IMR-90 (cell line): ENCODE measurements at regions of chr17 and their contacts with region 1.

Region 1: GRCh38 chr17:62981928-62982327 is 15.9 kb downstream of the TANC2 start:
- DNase-seq: peak; percentile 68
- ATAC-seq: peak; percentile 37; the same call in 1 of the 2 replicates
- H3K4me3 ChIP-seq: no peak overlapping the region
- H3K27ac ChIP-seq: no peak overlapping the region
- H3K4me1 ChIP-seq: peaks cover 7% of the 10 kb centered on the region; the same call in 1 of the 2 replicates
- H3K27me3 ChIP-seq: no peaks in the 10 kb centered on the region
- CTCF ChIP-seq: no peak
- POLR2A ChIP-seq: no peak
- RAD21 ChIP-seq: no peak

Region 2: DNA sequence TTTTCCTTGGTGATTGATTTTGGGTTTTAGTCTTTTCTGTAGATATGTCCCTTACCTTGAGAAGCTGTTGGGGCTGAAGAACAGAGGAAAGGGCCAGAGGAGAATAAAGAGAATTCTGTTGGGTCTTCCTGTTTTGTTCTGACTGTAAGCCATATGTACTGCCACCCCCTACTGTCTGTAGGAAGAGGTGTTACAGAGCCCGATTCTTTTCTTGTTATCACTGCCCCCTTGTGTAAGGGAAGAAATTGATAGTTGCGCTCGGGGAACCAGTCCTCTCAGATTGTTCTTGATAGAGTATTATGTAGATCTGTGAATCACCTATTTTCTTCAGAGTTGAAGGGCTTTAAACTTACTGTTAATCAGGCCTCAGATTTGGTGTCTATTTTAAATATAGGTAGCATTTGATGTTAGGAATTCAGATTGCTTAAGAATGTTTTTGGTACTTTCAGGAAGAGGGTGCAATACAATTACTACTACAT is 13.4 kb before region 1 on chr17:
- CTCF ChIA-PET with region 1: no interaction called
- POLR2A ChIA-PET with region 1: no interaction called
- dilution Hi-C with region 1: no loop called
- in situ Hi-C with region 1: no loop called
- intact Hi-C with region 1: no loop called
- DNase-seq: peak; percentile 94
- ATAC-seq: peak; percentile 43
- H3K4me3 ChIP-seq: peak overlapping the region; percentile 90
- H3K27ac ChIP-seq: peak overlapping the region; percentile 32; the same call in 1 of the 2 replicates
- H3K4me1 ChIP-seq: peaks cover 16% of the 10 kb centered on the region
- H3K27me3 ChIP-seq: no peaks in the 10 kb centered on the region
- CTCF ChIP-seq: peak; percentile 99
- POLR2A ChIP-seq: peak; percentile 77
- RAD21 ChIP-seq: peak; percentile 94

Region 3: GRCh38 chr17:62994931-62995330 is 13.0 kb after region 1 on chr17:
- CTCF ChIA-PET with region 1: interaction called, 3 read pairs
- POLR2A ChIA-PET with region 1: no interaction called
- dilution Hi-C with region 1: no loop called
- in situ Hi-C with region 1: no loop called
- intact Hi-C with region 1: loop called (anchors 2 kb)
- DNase-seq: peak; percentile 15
- ATAC-seq: no peak
- H3K4me3 ChIP-seq: no peak overlapping the region
- H3K27ac ChIP-seq: no peak overlapping the region
- H3K4me1 ChIP-seq: no peaks in the 10 kb centered on the region
- H3K27me3 ChIP-seq: no peaks in the 10 kb centered on the region
- CTCF ChIP-seq: no peak
- POLR2A ChIP-seq: no peak
- RAD21 ChIP-seq: no peak

Region 4: GRCh38 chr17:63024716-63025115 is 42.8 kb after region 1 on chr17:
- CTCF ChIA-PET with region 1: no interaction called
- POLR2A ChIA-PET with region 1: no interaction called
- dilution Hi-C with region 1: no loop called
- in situ Hi-C with region 1: no loop called
- intact Hi-C with region 1: no loop called
- DNase-seq: peak; percentile 42
- ATAC-seq: 0 out of 2 replicates have a peak, but pooled peaks have one; percentile 38
- H3K4me3 ChIP-seq: no peak overlapping the region
- H3K27ac ChIP-seq: no peak overlapping the region
- H3K4me1 ChIP-seq: peaks cover 4% of the 10 kb centered on the region
- H3K27me3 ChIP-seq: no peaks in the 10 kb centered on the region
- CTCF ChIP-seq: no peak
- POLR2A ChIP-seq: no peak
- RAD21 ChIP-seq: no peak

Region 5: DNA sequence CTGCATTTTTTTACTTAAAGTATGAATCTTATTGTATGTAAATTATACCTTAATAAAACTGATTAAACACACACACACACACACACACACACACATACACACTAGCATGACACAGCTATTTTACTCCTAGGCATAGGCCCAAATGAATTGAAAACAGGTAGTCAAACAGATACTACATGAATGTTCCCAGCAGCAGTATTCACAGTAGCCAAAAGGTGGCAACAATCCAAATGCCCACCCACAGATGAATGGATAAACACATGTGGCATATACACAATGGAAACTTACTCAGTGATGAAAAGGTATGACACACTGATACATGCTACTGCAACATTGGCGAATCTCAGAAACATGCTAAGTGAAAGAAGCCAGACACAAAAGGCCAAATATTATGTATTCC is 240.7 kb after region 1 on chr17:
- CTCF ChIA-PET with region 1: no interaction called
- POLR2A ChIA-PET with region 1: no interaction called
- dilution Hi-C with region 1: no loop called
- in situ Hi-C with region 1: no loop called
- intact Hi-C with region 1: no loop called
- DNase-seq: peak; percentile 33
- ATAC-seq: no peak
- H3K4me3 ChIP-seq: no peak overlapping the region
- H3K27ac ChIP-seq: no peak overlapping the region
- H3K4me1 ChIP-seq: no peaks in the 10 kb centered on the region
- H3K27me3 ChIP-seq: no peaks in the 10 kb centered on the region
- CTCF ChIP-seq: no peak
- POLR2A ChIP-seq: no peak
- RAD21 ChIP-seq: no peak